Mucosa of descending colon (tissue), 3 donors: ENCODE measurements at regions of chr3 and their contacts with region 1.

Region 1: DNA sequence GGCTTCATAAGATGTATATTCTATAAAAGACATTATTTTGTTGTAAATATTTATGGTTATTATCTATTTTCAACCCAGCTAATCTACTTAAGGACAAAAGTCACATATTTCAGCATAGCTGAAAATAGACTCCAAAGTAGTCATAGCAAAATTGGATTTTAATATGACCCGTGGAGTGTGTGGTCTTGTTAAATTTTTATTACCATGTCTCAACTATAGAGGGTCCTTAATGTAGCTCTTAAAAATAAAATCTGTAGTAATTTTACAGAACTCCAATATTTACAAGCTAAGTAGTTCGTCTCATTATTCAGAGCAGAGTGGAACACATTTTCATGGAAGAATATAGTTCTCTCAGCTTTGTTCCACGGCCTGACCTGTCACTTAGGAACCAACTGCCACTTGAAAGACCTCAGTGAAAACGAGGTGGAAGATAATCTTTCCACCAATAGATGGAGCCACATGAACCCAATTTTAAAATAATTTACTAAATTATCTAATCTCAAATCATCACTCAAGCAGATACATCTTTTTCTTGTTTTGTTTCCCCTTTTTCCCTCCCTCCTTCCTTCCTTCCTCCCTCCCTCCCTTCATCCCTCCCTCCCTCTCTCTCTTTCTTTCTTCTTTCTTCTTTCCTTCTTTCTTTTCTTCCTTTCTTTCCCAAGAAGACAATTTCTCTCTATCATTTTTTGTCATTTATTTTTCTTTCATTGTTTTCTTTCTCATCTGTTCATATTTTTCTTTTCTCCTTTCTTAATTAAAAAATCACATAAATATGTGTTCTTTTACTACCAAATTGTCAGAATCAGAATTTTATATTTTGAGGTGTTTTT is 97.2 kb downstream of the CLDN1 start:
- DNase-seq: peak in 1 of 3 donors; percentile 30
- ATAC-seq: peak; percentile 52
- H3K4me3 ChIP-seq: no peak overlapping the region
- H3K4me1 ChIP-seq: no peaks in the 10 kb centered on the region
- CTCF ChIP-seq: no peak

Region 2: GRCh38 chr3:189937307-189938124 is 287.6 kb before region 1 on chr3:
- intact Hi-C with region 1: no loop called
- DNase-seq: no peak
- ATAC-seq: no peak
- H3K4me3 ChIP-seq: no peak overlapping the region
- H3K4me1 ChIP-seq: peaks cover 6% of the 10 kb centered on the region
- CTCF ChIP-seq: no peak

Region 3: GRCh38 chr3:190384241-190384863 is 159.3 kb after region 1 on chr3:
- intact Hi-C with region 1: loop called in 1 of 2 experiments (anchors 10 kb)
- DNase-seq: peak in 1 of 3 donors; percentile 60
- ATAC-seq: peak; percentile 91
- H3K4me3 ChIP-seq: no peak overlapping the region
- H3K4me1 ChIP-seq: no peaks in the 10 kb centered on the region
- CTCF ChIP-seq: no peak

Region 4: DNA sequence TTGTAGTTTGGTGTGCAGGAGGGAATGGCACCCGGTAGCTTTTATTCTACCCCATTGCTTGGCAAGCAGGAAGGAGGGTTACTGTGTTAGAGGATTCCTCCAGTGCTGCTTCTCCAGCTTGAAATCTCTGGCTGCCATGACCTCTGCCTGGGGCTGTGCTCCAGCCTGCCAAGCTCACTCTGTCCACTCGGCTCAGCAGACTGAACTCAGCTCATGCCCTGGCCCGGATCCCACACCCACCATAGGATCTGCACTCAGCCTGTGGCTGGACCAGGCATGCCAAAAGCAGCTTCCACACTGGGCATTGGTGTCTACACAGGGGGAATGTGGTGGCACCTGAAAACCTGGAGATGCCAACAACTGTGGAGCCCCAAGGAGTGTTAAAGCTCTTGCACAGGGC is 189.2 kb after region 1 on chr3:
- intact Hi-C with region 1: no loop called
- DNase-seq: no peak
- ATAC-seq: no peak
- H3K4me3 ChIP-seq: no peak overlapping the region
- H3K4me1 ChIP-seq: no peaks in the 10 kb centered on the region
- CTCF ChIP-seq: no peak

Region 5: DNA sequence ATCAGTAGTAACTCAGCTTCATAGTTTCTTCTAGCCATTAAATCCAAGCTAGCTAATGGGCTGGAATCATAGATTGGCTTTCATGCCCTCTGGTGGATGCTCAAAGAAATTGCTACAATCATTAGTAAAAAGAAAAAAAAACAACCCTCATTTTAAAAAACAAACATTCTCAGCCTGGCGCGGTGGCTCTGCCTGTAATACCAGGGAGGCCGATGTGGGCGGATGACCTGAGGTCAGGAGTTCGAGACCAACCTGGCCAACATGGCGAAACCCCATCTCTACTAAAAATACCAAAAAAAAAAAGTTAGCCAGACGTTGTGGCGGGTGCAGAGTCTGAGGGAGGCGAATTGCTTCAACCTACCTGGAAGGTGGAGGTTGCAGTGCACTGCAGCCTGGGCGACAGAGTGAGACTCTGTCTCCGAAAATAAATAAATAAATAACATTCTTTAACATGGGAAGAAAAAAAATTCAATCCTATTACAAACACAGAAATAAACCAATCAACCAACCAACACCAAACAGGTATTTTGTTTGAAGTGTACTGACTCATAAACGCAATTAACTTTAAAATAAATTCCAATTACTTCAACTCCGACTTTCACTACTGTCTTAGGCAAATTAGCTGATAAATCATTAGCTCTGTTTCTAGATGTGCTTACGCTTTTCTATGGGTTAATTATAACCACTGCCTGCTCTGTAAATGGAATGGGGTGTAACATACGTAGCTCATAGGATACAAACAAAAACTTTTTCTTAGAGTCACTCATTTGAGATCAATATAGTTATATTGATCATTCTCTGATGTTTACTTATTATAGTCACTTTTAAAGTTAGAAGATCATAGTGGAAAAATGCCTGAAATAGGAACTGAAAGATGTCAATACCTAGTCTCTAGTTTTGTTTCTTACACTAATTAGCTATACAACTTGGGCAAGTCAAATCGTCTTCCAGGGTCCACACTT is 199.7 kb after region 1 on chr3:
- intact Hi-C with region 1: loop called in 1 of 2 experiments (anchors 10 kb)
- DNase-seq: peak; percentile 35 to 60 (median 59)
- ATAC-seq: peak; percentile 79
- H3K4me3 ChIP-seq: no peak overlapping the region
- H3K4me1 ChIP-seq: no peaks in the 10 kb centered on the region
- CTCF ChIP-seq: no peak